MCF 10A (cell line): ENCODE measurements at regions of chr20 and their contacts with region 1.

Region 1: GRCh38 chr20:36591854-36592641 is 13.5 kb upstream of the RAB5IF start:
- DNase-seq: peak; percentile 47
- H3K4me3 Mint-ChIP-seq: no peak overlapping the region
- H3K27ac Mint-ChIP-seq: no peak overlapping the region
- H3K4me1 Mint-ChIP-seq: no peaks in the 10 kb centered on the region
- H3K27me3 Mint-ChIP-seq: no peaks in the 10 kb centered on the region
- CTCF ChIP-seq: peak; percentile 15

Region 2: GRCh38 chr20:36550797-36551299 is 41.2 kb before region 1 on chr20:
- CTCF ChIA-PET with region 1: interaction called, 4 read pairs
- POLR2A ChIA-PET with region 1: no interaction called
- intact Hi-C with region 1: loop called (anchors 1 kb)
- DNase-seq: no peak
- H3K4me3 Mint-ChIP-seq: no peak overlapping the region
- H3K27ac Mint-ChIP-seq: no peak overlapping the region
- H3K4me1 Mint-ChIP-seq: no peaks in the 10 kb centered on the region
- H3K27me3 Mint-ChIP-seq: no peaks in the 10 kb centered on the region
- CTCF ChIP-seq: no peak

Region 3: DNA sequence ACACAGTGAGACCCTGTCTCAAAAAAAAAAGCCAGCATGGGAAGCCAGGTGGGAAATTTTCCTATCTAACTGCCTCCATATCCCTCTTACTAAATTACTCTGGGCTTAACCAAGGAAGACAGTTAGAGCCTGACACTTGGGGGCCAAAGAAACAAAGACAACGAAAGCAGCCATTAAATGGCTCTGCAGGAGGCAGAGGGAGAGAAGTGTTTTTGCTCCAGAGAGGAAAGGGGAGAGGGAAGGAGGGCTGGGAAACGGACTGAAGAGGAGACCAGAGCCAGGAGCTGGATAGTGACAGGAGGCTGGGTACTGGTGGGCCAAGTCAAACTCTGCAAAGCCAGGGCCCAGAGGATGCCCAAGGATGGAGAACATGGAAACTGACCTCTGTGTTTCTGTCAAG is 29.3 kb before region 1 on chr20:
- CTCF ChIA-PET with region 1: interaction called, 14 read pairs
- POLR2A ChIA-PET with region 1: no interaction called
- intact Hi-C with region 1: no loop called
- DNase-seq: no peak
- H3K4me3 Mint-ChIP-seq: no peak overlapping the region
- H3K27ac Mint-ChIP-seq: no peak overlapping the region
- H3K4me1 Mint-ChIP-seq: no peaks in the 10 kb centered on the region
- H3K27me3 Mint-ChIP-seq: no peaks in the 10 kb centered on the region
- CTCF ChIP-seq: no peak

Region 4: DNA sequence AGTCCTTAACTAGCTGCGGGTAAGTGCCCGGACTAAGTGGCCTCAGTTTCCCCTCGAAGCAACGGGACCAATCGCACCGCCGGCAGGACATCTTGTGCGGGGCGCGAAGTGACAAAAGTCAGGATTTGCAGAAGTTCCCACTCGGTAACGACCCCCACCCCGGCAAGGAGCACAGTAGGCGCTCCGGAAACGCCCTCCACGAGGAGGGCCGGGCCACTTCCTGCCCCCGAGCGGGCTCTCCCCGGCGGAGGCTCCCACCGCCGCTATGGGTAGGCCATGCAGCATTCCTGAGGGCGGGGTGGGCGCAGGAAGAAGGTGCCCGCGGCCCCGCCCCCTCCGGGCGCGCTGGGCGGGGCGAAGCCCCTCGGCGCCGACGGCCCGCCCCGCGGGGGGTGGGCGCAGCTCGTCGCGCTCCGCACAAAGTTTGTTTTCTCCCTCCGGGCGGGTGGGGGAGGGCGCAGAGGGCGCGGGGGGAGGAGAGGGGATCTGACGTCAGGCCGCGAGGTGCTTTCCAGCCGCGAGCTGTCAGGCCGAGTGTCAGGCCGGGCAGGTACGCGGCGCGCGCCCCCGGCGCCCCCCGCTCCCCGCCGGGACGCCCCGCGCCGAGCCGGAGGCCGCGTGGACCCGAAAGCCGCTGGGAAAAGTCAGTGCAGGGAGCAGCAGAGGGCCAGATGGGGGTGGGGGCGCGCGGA is 18.8 kb before region 1 on chr20 and contains the start of gene TGIF2:
- CTCF ChIA-PET with region 1: interaction called, 16 read pairs
- POLR2A ChIA-PET with region 1: interaction called, 14 read pairs
- intact Hi-C with region 1: no loop called
- DNase-seq: peak; percentile 57
- H3K4me3 Mint-ChIP-seq: peak within 1 kb of the TSS; percentile 74
- H3K27ac Mint-ChIP-seq: peak within 1 kb of the TSS; percentile 87
- H3K4me1 Mint-ChIP-seq: peaks cover 19% of the 10 kb centered on the region
- H3K27me3 Mint-ChIP-seq: no peaks in the 10 kb centered on the region
- CTCF ChIP-seq: no peak
- total RNA-seq, gene TGIF2: 5.9 and 9.7 TPM in 2 replicates